SK-N-SH (cell line): ENCODE measurements at regions of chr18 and their contacts with region 1.

Region 1: DNA sequence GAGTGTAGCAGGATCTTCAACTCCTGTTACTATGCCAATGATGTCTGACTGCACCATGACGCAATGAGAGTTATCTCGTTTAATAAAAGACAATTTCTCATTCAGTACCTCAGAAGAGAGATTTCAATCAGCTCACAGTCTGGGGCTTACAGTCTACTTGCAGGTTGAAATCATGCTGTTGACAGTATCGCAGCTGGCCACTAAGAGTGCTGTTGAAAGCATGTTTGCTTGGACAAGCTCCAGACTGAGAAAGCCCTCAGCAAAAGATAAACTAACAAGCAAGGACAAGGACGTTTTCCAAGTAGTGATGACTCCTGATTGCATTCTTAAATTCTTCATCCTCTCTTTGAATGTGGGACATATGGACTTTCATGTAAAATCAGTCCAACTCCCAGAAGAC is 145.2 kb upstream of the SYT4 start:
- DNase-seq: peak; percentile 47
- H3K4me3 ChIP-seq: no peak overlapping the region; a peak in 1 of 4 replicates
- H3K27ac ChIP-seq: no peak overlapping the region
- H3K4me1 ChIP-seq: peaks cover 0 to 6% of the 10 kb centered on the region in 2 experiments; a peak in 2 of 4 replicates
- H3K27me3 ChIP-seq: no peaks in the 10 kb centered on the region
- CTCF ChIP-seq: no peak; the same call in 1 of the 2 replicates
- EP300 ChIP-seq: 0 out of 4 replicates have a peak, but pooled peaks of 1 of the 2 experiments have one; percentile 42
- RAD21 ChIP-seq: peak; percentile 47

Region 2: DNA sequence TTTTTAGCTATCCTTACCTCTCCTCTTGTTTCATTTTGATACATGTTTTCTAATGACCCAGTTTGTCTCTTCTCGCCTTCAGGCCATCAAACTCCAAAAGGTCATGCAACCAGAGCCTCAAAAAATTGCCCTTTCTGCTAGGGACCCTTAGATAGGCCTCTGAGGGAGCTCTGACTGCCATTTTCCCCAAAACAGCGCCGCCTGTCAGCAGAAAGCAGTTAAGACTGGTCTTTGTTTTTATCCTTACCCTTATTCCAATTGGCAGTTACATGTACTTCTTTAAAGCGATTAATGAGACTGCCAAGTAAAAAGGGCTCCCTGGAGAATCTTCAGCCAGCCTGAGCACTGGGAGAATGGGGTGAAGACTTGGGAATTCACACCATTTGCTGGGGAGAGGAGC is 251.9 kb before region 1 on chr18:
- CTCF ChIA-PET with region 1: no interaction called
- POLR2A ChIA-PET with region 1: no interaction called
- DNase-seq: no peak
- H3K4me3 ChIP-seq: no peak overlapping the region
- H3K27ac ChIP-seq: no peak overlapping the region
- H3K4me1 ChIP-seq: no peaks in the 10 kb centered on the region
- H3K27me3 ChIP-seq: no peaks in the 10 kb centered on the region
- CTCF ChIP-seq: peak; percentile 20; the same call in 1 of the 2 replicates
- EP300 ChIP-seq: no peak
- RAD21 ChIP-seq: no peak

Region 3: DNA sequence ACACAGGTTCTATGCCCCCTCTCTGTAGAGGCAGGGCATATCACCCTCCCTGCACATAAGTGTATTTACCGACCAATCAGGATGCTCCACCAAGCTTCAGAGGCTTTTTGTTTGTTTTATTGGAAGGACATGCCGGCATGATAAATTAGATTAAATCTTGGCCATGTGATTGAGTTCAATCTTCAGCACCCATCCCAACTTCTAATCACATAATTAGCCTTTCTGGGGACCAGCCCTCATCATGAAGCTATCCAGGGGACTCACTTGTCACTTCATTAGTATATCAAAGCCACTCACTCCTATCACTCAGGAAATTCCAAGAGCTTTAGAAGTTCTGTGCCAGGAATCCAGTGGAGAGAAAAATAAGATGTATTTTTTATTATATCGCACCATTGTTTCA is 13.3 kb after region 1 on chr18:
- CTCF ChIA-PET with region 1: interaction called, 31 read pairs
- POLR2A ChIA-PET with region 1: no interaction called
- DNase-seq: no peak
- H3K4me3 ChIP-seq: no peak overlapping the region
- H3K27ac ChIP-seq: no peak overlapping the region
- H3K4me1 ChIP-seq: no peaks in the 10 kb centered on the region
- H3K27me3 ChIP-seq: no peaks in the 10 kb centered on the region
- CTCF ChIP-seq: no peak
- EP300 ChIP-seq: no peak
- RAD21 ChIP-seq: no peak

Region 4: GRCh38 chr18:43563780-43564179 is 141.3 kb after region 1 on chr18:
- CTCF ChIA-PET with region 1: interaction called, 24 read pairs
- POLR2A ChIA-PET with region 1: no interaction called
- DNase-seq: peak; percentile 40
- H3K4me3 ChIP-seq: no peak overlapping the region
- H3K27ac ChIP-seq: no peak overlapping the region
- H3K4me1 ChIP-seq: no peaks in the 10 kb centered on the region; a peak in 1 of 4 replicates
- H3K27me3 ChIP-seq: no peaks in the 10 kb centered on the region
- CTCF ChIP-seq: peak; percentile 67
- EP300 ChIP-seq: no peak
- RAD21 ChIP-seq: peak; percentile 96

Region 5: DNA sequence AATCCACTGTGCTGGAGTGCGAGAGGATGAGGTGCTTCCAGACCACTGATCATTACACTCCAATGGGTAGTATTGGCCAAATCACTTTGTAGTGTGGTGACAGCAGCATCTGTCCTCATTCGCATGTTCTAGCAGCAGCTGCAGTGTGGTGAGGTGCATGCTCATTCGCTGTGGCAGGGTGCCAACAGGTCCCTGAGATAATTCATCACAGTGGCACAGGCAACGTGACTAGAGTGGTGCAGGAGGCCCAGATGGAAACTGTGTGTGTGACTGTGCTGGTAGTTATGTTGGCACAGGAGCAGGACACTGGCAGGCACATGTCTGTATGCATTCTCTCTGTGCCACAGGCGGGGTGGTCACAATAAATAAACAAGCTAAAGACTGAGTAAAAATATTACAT is 184.3 kb after region 1 on chr18:
- CTCF ChIA-PET with region 1: no interaction called
- POLR2A ChIA-PET with region 1: no interaction called
- DNase-seq: peak; percentile 37
- H3K4me3 ChIP-seq: no peak overlapping the region; a peak in 1 of 4 replicates
- H3K27ac ChIP-seq: no peak overlapping the region
- H3K4me1 ChIP-seq: peaks cover 0 to 4% of the 10 kb centered on the region in 2 experiments; a peak in 1 of 4 replicates
- H3K27me3 ChIP-seq: no peaks in the 10 kb centered on the region
- CTCF ChIP-seq: no peak
- EP300 ChIP-seq: no peak
- RAD21 ChIP-seq: no peak